Naive thymus-derived CD4-positive, alpha-beta T cell (primary cell): ENCODE measurements at regions of chr4 and their contacts with region 1.

Region 1: GRCh38 chr4:77862478-77863216 is at the start of gene MRPL1:
- DNase-seq: peak; percentile 68 to 95 (median 92)
- ATAC-seq: peak; percentile 87
- H3K4me3 ChIP-seq: peak within 1 kb of the TSS; percentile 76
- H3K4me3 Mint-ChIP-seq: peak within 1 kb of the TSS; percentile 92 to 99 (median 96)
- H3K27ac ChIP-seq: peak within 1 kb of the TSS; percentile 99
- H3K27ac Mint-ChIP-seq: peak within 1 kb of the TSS; percentile 97 to 100 (median 99)
- H3K4me1 ChIP-seq: peaks cover 24 to 31% of the 10 kb centered on the region in 2 donors
- H3K4me1 Mint-ChIP-seq: peaks cover 33 to 88% (median 71%) of the 10 kb centered on the region in 7 donors
- H3K27me3 ChIP-seq: no peaks in the 10 kb centered on the region
- H3K27me3 Mint-ChIP-seq: peaks cover 0 to 4% (median 0%) of the 10 kb centered on the region in 5 donors
- total RNA-seq, gene MRPL1: 13.0 to 37.9 (median 17.8) TPM

Region 2: DNA sequence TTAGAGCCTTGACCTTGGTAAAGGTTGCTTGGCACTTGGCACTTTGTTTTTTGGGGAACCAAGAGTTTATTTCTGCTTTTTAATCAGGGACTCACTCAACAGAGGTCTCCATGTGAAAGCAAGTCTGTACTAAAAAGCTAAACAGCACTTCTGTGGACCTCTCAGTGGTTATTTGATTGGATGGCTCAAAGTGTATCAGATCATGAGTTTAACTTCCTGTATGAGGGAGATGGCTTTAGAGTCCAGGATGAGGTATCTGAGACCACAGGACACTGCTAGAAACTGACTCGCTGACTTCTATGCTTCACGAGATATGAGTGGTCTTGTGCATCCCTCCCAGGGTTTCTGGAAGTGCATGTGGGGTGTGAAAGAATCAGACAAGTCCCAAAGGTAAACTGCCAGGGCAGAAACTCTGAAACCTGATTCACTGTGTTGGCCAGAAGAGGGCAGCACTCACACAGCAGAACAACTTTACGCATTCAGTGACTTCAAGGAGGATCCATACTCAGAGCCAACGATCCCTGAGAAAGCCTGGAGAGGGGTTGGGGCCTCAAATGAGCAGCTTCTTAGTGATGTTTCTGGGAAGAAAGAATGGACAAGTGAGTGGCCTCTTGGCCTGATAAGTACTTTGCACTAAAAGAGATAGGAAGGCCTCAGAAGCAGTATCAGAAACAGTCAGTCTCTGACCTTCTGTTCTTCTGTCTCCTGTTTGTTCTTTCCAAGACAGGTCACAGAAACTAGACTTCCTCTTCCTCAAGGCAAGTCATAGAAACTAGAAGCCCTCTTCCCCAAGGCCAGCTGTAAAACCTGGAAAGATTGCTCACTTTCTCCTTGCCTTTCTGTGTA is 477.3 kb before region 1 on chr4:
- CTCF ChIA-PET with region 1: no interaction called
- POLR2A ChIA-PET with region 1: no interaction called
- intact Hi-C with region 1: loop called in 1 of 2 experiments (anchors 2 kb)
- DNase-seq: peak in 7 of 9 donors; percentile 19 to 51 (median 39)
- ATAC-seq: peak; percentile 72
- H3K4me3 ChIP-seq: no peak overlapping the region
- H3K4me3 Mint-ChIP-seq: no peak overlapping the region
- H3K27ac ChIP-seq: no peak overlapping the region
- H3K27ac Mint-ChIP-seq: no peak overlapping the region
- H3K4me1 ChIP-seq: no peaks in the 10 kb centered on the region
- H3K4me1 Mint-ChIP-seq: peaks cover 0 to 8% (median 0%) of the 10 kb centered on the region in 7 donors
- H3K27me3 ChIP-seq: no peaks in the 10 kb centered on the region
- H3K27me3 Mint-ChIP-seq: peaks cover 0 to 8% (median 0%) of the 10 kb centered on the region in 5 donors

Region 3: DNA sequence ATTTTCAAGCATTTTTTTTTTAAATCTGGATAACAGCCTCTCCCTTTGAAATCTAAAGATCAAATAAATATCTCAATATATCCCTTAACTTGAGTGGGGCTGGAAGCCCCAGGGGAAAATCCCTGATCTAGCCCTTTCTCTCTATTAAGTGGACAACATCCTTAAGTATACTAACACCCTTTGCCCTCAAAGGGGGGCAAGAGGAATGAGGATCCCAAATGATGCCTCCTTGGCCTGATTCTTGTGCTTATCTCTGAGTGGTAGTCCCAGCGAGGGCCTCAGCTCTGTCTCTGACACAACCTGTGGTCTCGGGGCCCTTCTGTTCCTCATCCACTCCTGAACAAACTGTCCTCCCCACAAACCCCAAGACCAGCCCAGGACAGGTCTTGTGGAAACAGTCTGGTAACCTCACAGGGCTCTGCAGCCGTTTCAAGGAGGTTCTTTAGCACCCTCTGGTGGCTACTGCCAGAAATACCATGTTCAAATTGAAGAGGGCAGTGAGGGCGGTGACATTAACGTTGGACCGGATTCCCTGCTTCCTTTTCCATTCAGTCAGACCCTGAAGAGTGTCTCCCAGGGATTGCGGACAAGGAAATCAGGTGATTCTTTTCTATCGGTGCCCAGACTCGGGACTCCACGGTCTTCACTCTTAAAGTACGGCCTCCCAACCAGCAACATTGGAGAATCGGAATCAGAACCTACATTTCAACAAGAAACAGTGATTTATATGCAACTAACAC is 244.1 kb before region 1 on chr4:
- CTCF ChIA-PET with region 1: no interaction called
- POLR2A ChIA-PET with region 1: no interaction called
- intact Hi-C with region 1: loop called in 1 of 2 experiments (anchors 1 kb)
- DNase-seq: peak; percentile 13 to 63 (median 42)
- ATAC-seq: peak; percentile 86
- H3K4me3 ChIP-seq: no peak overlapping the region
- H3K4me3 Mint-ChIP-seq: peak overlapping the region in 1 of 10 donors; percentile 51
- H3K27ac ChIP-seq: no peak overlapping the region
- H3K27ac Mint-ChIP-seq: no peak overlapping the region
- H3K4me1 ChIP-seq: no peaks in the 10 kb centered on the region
- H3K4me1 Mint-ChIP-seq: peaks cover 5 to 12% (median 7%) of the 10 kb centered on the region in 7 donors
- H3K27me3 ChIP-seq: no peaks in the 10 kb centered on the region
- H3K27me3 Mint-ChIP-seq: peaks cover 6 to 32% (median 23%) of the 10 kb centered on the region in 5 donors

Region 4: DNA sequence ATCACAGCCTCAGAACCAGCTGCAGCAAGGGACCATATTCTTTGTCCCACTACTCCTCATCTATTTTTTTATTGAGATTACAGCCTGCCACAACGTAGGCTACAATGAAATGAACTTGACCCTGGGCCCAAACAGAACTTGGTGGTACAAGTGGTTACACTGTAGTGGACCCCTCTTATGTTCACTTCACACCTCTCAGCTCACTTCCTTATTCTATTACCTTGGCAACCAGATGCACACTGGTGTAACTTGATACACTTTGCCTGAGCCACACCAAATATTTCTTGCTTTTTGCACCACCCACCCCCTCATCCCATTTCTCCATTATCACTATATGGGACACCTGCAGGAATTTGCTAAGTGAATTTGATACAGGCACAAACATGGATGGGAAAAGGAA is 151.2 kb before region 1 on chr4:
- CTCF ChIA-PET with region 1: no interaction called
- POLR2A ChIA-PET with region 1: no interaction called
- intact Hi-C with region 1: no loop called
- DNase-seq: no peak
- ATAC-seq: no peak
- H3K4me3 ChIP-seq: no peak overlapping the region
- H3K4me3 Mint-ChIP-seq: no peak overlapping the region
- H3K27ac ChIP-seq: no peak overlapping the region
- H3K27ac Mint-ChIP-seq: peak overlapping the region in 5 of 9 donors; percentile 1 to 59 (median 28)
- H3K4me1 ChIP-seq: no peaks in the 10 kb centered on the region
- H3K4me1 Mint-ChIP-seq: peaks cover 3 to 25% (median 10%) of the 10 kb centered on the region in 7 donors
- H3K27me3 ChIP-seq: no peaks in the 10 kb centered on the region
- H3K27me3 Mint-ChIP-seq: no peaks in the 10 kb centered on the region

Region 5: GRCh38 chr4:77742054-77742453 is 120.6 kb before region 1 on chr4:
- CTCF ChIA-PET with region 1: no interaction called
- POLR2A ChIA-PET with region 1: interaction called, 5 read pairs
- intact Hi-C with region 1: loop called in 1 of 2 experiments (anchors 5 kb)
- DNase-seq: no peak
- ATAC-seq: no peak
- H3K4me3 ChIP-seq: no peak overlapping the region
- H3K4me3 Mint-ChIP-seq: no peak overlapping the region
- H3K27ac ChIP-seq: no peak overlapping the region
- H3K27ac Mint-ChIP-seq: peak overlapping the region in 1 of 9 donors; percentile 59
- H3K4me1 ChIP-seq: peaks cover 0 to 1% of the 10 kb centered on the region in 2 donors
- H3K4me1 Mint-ChIP-seq: peaks cover 22 to 67% (median 52%) of the 10 kb centered on the region in 7 donors
- H3K27me3 ChIP-seq: no peaks in the 10 kb centered on the region
- H3K27me3 Mint-ChIP-seq: no peaks in the 10 kb centered on the region

Region 6: DNA sequence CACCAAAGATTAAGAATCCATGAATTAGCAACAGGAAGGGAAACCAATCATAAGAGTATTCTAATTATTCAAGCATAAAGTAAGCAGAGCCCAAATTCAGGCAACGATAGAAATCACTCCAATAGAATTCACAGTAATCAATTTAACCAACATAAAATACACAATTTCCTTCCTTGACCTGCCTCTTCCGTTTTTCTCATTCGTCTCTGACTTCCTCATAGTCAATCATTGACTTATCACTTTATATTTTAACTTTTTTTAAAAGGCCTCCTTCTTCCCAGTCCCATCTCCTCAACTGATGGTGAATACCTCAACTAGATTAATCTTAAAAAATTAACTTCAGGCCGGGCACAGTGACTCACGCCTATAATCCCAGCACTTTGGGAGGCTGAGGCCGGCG is 56.8 kb before region 1 on chr4:
- CTCF ChIA-PET with region 1: interaction called, 3 read pairs
- POLR2A ChIA-PET with region 1: interaction called, 34 read pairs
- intact Hi-C with region 1: loop called in 1 of 2 experiments (anchors 1 kb)
- DNase-seq: no peak
- ATAC-seq: no peak
- H3K4me3 ChIP-seq: no peak overlapping the region
- H3K4me3 Mint-ChIP-seq: peak overlapping the region; percentile 5 to 64 (median 52)
- H3K27ac ChIP-seq: no peak overlapping the region
- H3K27ac Mint-ChIP-seq: peak overlapping the region in 7 of 9 donors; percentile 53 to 82 (median 66)
- H3K4me1 ChIP-seq: peaks cover 39 to 66% of the 10 kb centered on the region in 2 donors
- H3K4me1 Mint-ChIP-seq: peaks cover 54 to 96% (median 76%) of the 10 kb centered on the region in 7 donors
- H3K27me3 ChIP-seq: no peaks in the 10 kb centered on the region
- H3K27me3 Mint-ChIP-seq: no peaks in the 10 kb centered on the region

Region 7: GRCh38 chr4:77827343-77827742 is 35.3 kb before region 1 on chr4:
- CTCF ChIA-PET with region 1: interaction called, 3 read pairs
- POLR2A ChIA-PET with region 1: interaction called, 85 read pairs
- intact Hi-C with region 1: no loop called
- DNase-seq: peak in 6 of 9 donors; percentile 43 to 70 (median 58)
- ATAC-seq: peak; percentile 84
- H3K4me3 ChIP-seq: no peak overlapping the region
- H3K4me3 Mint-ChIP-seq: peak overlapping the region in 9 of 10 donors; percentile 21 to 77 (median 52)
- H3K27ac ChIP-seq: peak overlapping the region; percentile 52
- H3K27ac Mint-ChIP-seq: peak overlapping the region; percentile 57 to 95 (median 85)
- H3K4me1 ChIP-seq: peaks cover 37 to 42% of the 10 kb centered on the region in 2 donors
- H3K4me1 Mint-ChIP-seq: peaks cover 19 to 64% (median 56%) of the 10 kb centered on the region in 7 donors
- H3K27me3 ChIP-seq: no peaks in the 10 kb centered on the region
- H3K27me3 Mint-ChIP-seq: no peaks in the 10 kb centered on the region

Region 8: DNA sequence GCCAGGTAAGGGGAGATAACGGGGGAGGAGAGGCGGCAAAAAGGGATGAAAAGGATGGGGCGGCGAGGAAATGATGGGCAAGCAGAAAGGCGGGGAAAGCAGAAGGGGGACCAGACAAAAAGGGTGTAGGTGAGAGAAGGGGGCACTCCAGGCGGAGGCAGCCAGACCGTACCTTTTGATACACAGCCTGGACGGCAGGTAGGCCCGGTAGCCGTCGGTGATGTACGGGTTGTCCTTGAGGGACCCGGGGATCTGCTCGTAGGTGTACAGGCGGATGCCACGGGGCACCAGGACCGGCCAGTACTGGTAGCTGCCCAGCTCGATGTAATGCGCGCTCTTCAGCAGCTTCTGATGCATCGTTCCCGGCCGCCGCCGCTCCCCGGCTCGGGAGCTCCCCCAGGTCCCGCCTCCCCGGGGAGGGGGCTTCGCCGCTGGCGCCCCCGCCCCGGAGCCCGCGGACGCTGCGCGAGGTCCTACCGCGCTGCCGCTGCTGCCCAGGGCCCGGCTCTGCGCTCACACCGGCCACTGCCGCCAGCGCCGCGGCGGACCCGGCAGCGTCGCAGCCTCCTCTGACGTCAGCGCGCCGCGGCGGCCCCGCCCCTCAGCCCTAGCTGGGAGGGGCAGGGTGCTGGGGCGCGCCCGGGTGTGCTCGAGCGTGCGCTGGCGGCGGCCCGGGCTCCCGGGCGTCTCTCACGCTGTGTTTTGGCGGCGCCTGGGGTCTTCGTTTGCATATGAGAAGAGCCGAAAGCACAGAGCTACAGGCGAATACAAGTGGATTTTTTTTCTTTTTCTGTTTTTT is 1076.4 kb after region 1 on chr4 and contains the start of gene PAQR3:
- CTCF ChIA-PET with region 1: no interaction called
- POLR2A ChIA-PET with region 1: no interaction called
- intact Hi-C with region 1: loop called in 1 of 2 experiments (anchors 2 kb)
- DNase-seq: peak; percentile 70 to 91 (median 86)
- ATAC-seq: peak; percentile 98
- H3K4me3 ChIP-seq: peak within 1 kb of the TSS; percentile 86
- H3K4me3 Mint-ChIP-seq: peak within 1 kb of the TSS; percentile 92 to 100 (median 98)
- H3K27ac ChIP-seq: peak within 1 kb of the TSS; percentile 82
- H3K27ac Mint-ChIP-seq: peak within 1 kb of the TSS; percentile 82 to 97 (median 92)
- H3K4me1 ChIP-seq: peaks cover 5 to 14% of the 10 kb centered on the region in 2 donors
- H3K4me1 Mint-ChIP-seq: peaks cover 23 to 54% (median 39%) of the 10 kb centered on the region in 7 donors
- H3K27me3 ChIP-seq: no peaks in the 10 kb centered on the region
- H3K27me3 Mint-ChIP-seq: peaks cover 8 to 18% (median 11%) of the 10 kb centered on the region in 5 donors
- total RNA-seq, gene PAQR3: 13.1 to 24.3 (median 15.8) TPM